CD4-positive, alpha-beta T cell (primary cell): ENCODE measurements at regions of chr16 and their contacts with region 1.

Region 1: DNA sequence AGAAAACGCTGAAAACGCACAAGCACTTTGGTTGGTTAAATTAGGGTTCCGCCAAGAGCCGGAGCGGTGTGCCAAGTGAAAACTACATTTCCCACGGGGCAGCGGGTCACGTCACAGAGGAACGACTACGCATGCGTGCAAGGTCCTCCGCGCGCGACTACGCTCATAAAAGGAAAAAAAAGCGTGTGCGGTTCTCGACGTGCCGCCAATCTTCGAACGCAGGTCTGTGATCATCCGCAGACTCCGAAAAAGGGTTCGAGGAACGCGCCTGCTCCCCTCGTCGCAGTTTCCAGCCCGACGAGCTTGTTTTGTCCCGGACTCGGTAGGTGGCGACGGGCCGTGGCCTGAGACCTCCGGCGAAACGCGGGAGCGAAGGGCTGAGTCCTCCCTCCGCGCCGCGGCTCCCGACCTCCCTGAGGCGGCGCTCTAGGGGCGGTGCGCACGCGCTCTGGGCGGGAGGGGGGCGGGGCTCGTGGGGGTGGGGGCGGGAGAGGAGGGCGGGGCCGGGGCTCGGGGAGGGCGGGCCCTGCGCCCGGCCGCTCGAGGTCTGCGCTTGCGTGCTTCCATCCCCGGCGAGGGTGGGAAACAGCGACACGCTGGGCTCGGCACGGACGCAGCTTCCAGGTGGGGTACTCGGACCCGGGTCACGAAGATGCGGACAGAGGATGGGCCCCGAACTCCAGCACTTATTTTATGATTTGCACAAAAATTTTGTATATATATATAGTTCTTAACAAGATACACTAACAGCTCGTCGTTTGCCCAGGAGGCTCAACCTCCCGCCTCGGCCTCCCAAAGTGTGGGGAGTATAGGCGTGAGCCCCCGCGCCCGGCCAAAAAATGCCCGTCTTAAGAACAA is at the start of gene SGF29:
- DNase-seq: peak; percentile 89 to 98 (median 93)
- ATAC-seq: peak; percentile 86
- H3K4me3 ChIP-seq: peak within 1 kb of the TSS; percentile 84
- H3K4me3 Mint-ChIP-seq: peak within 1 kb of the TSS; percentile 94
- H3K27ac ChIP-seq: peak within 1 kb of the TSS; percentile 90 to 98
- H3K27ac Mint-ChIP-seq: peak within 1 kb of the TSS; percentile 97
- H3K4me1 ChIP-seq: peaks cover 42% of the 10 kb centered on the region
- H3K4me1 Mint-ChIP-seq: peaks cover 43% of the 10 kb centered on the region
- H3K27me3 ChIP-seq: no peaks in the 10 kb centered on the region
- H3K27me3 Mint-ChIP-seq: no peaks in the 10 kb centered on the region
- CTCF ChIP-seq: peak; percentile 34
- total RNA-seq, gene SGF29: 38.9 to 40.3 TPM

Region 2: GRCh38 chr16:28309811-28310311 is 244.1 kb before region 1 on chr16:
- CTCF ChIA-PET with region 1: no interaction called
- POLR2A ChIA-PET with region 1: interaction called, 4 read pairs
- intact Hi-C with region 1: loop called in 1 of 2 experiments (anchors 5 kb)
- DNase-seq: peak; percentile 65 to 97 (median 85)
- ATAC-seq: peak; percentile 92
- H3K4me3 ChIP-seq: peak overlapping the region; percentile 32
- H3K4me3 Mint-ChIP-seq: peak overlapping the region; percentile 75
- H3K27ac ChIP-seq: peak overlapping the region; percentile 86 to 89
- H3K27ac Mint-ChIP-seq: peak overlapping the region; percentile 96
- H3K4me1 ChIP-seq: peaks cover 59% of the 10 kb centered on the region
- H3K4me1 Mint-ChIP-seq: peaks cover 69% of the 10 kb centered on the region
- H3K27me3 ChIP-seq: no peaks in the 10 kb centered on the region
- H3K27me3 Mint-ChIP-seq: no peaks in the 10 kb centered on the region
- CTCF ChIP-seq: no peak

Region 3: GRCh38 chr16:28531777-28532744 is 21.9 kb before region 1 on chr16:
- CTCF ChIA-PET with region 1: no interaction called
- POLR2A ChIA-PET with region 1: interaction called, 15 read pairs
- intact Hi-C with region 1: loop called in 1 of 2 experiments (anchors 2 kb)
- DNase-seq: no peak
- ATAC-seq: no peak
- H3K4me3 ChIP-seq: no peak overlapping the region
- H3K4me3 Mint-ChIP-seq: peak overlapping the region; percentile 45
- H3K27ac ChIP-seq: no peak overlapping the region
- H3K27ac Mint-ChIP-seq: peak overlapping the region; percentile 33
- H3K4me1 ChIP-seq: peaks cover 35% of the 10 kb centered on the region
- H3K4me1 Mint-ChIP-seq: peaks cover 42% of the 10 kb centered on the region
- H3K27me3 ChIP-seq: no peaks in the 10 kb centered on the region
- H3K27me3 Mint-ChIP-seq: no peaks in the 10 kb centered on the region
- CTCF ChIP-seq: no peak

Region 4: GRCh38 chr16:28609631-28610594 is 55.9 kb after region 1 on chr16 and contains the start of gene SULT1A1:
- CTCF ChIA-PET with region 1: no interaction called
- POLR2A ChIA-PET with region 1: no interaction called
- intact Hi-C with region 1: loop called in 1 of 2 experiments (anchors 10 kb)
- DNase-seq: peak in 3 of 14 experiments; percentile 8 to 17 (median 8)
- ATAC-seq: no peak
- H3K4me3 ChIP-seq: no peak within 1 kb of the TSS
- H3K4me3 Mint-ChIP-seq: no peak within 1 kb of the TSS
- H3K27ac ChIP-seq: no peak within 1 kb of the TSS
- H3K27ac Mint-ChIP-seq: peak within 1 kb of the TSS; percentile 17
- H3K4me1 ChIP-seq: peaks cover 6% of the 10 kb centered on the region
- H3K4me1 Mint-ChIP-seq: peaks cover 15% of the 10 kb centered on the region
- H3K27me3 ChIP-seq: no peaks in the 10 kb centered on the region
- H3K27me3 Mint-ChIP-seq: no peaks in the 10 kb centered on the region
- CTCF ChIP-seq: no peak
- total RNA-seq, gene SULT1A1: 13.8 to 14.4 TPM